ENCODE measurements at regions of chr12 and their contacts with region 1.

Region 1: GRCh38 chr12:131438881-131439280 is 272.0 kb upstream of the SFSWAP start:
- DNase-seq: no peak
- H3K4me3 Mint-ChIP-seq: no peak overlapping the region
- H3K27ac Mint-ChIP-seq: no peak overlapping the region
- H3K4me1 Mint-ChIP-seq: no peaks in the 10 kb centered on the region
- H3K27me3 Mint-ChIP-seq: peaks cover 51% of the 10 kb centered on the region
- CTCF ChIP-seq: no peak

Region 2: GRCh38 chr12:131229426-131230339 is 209.2 kb before region 1 on chr12:
- CTCF ChIA-PET with region 1: interaction called, 13 read pairs
- intact Hi-C with region 1: loop called (anchors 2 kb)
- DNase-seq: no peak
- H3K4me3 Mint-ChIP-seq: no peak overlapping the region
- H3K27ac Mint-ChIP-seq: no peak overlapping the region
- H3K4me1 Mint-ChIP-seq: peaks cover 14% of the 10 kb centered on the region
- H3K27me3 Mint-ChIP-seq: peaks cover 27% of the 10 kb centered on the region
- CTCF ChIP-seq: no peak

Region 3: GRCh38 chr12:131628025-131628875 is 189.4 kb after region 1 on chr12:
- CTCF ChIA-PET with region 1: no interaction called
- intact Hi-C with region 1: no loop called
- DNase-seq: no peak
- H3K4me3 Mint-ChIP-seq: no peak overlapping the region
- H3K27ac Mint-ChIP-seq: no peak overlapping the region
- H3K4me1 Mint-ChIP-seq: no peaks in the 10 kb centered on the region
- H3K27me3 Mint-ChIP-seq: peaks cover 84% of the 10 kb centered on the region
- CTCF ChIP-seq: no peak

Region 4: GRCh38 chr12:131737142-131737827 is 298.4 kb after region 1 on chr12:
- CTCF ChIA-PET with region 1: no interaction called
- intact Hi-C with region 1: no loop called
- DNase-seq: peak; percentile 94
- H3K4me3 Mint-ChIP-seq: peak overlapping the region; percentile 63
- H3K27ac Mint-ChIP-seq: peak overlapping the region; percentile 73
- H3K4me1 Mint-ChIP-seq: peaks cover 28% of the 10 kb centered on the region
- H3K27me3 Mint-ChIP-seq: no peaks in the 10 kb centered on the region
- CTCF ChIP-seq: no peak